ENCODE measurements at regions of chr7 and their contacts with region 1.

Region 1: DNA sequence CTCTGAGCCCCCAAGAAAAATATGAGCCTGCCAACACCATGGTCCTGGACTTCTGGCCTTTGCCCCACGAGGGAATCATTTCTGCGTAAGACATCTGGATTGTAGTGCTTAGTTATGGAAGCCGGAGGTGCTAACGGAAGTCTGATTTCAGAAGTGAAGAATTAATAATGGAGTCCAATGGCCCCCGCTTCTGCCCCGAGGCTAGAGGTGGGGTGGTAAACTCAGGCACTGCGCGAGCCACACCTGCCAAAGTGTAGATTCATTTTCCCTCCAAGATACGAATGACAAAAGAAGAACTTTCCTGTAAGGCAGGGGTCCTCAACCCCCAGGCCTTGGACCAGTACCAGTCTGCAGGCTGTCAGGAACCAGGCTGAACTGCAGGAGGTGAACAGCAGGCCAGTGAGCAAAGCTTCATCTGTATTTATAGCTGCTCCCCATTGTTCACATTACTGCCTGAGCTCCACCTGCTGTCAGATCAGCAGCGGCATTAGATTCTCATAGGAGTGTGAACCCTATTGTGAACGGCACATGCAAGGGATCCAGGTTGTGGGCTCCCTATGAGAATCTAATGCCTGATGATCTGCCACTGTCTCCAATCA is 22.2 kb downstream of the CNPY1 start:
- DNase-seq: no peak
- ATAC-seq: peak; percentile 54; the same call in 1 of the 2 replicates
- H3K4me3 ChIP-seq: no peak overlapping the region
- H3K27ac ChIP-seq: no peak overlapping the region
- H3K4me1 ChIP-seq: no peaks in the 10 kb centered on the region
- H3K27me3 ChIP-seq: peaks cover 14% of the 10 kb centered on the region
- CTCF ChIP-seq: no peak; the same call in 1 of the 2 replicates

Region 2: GRCh38 chr7:155380221-155380861 is 143.8 kb before region 1 on chr7:
- CTCF ChIA-PET with region 1: interaction called, 7 read pairs
- POLR2A ChIA-PET with region 1: no interaction called
- in situ Hi-C with region 1: no loop called
- intact Hi-C with region 1: loop called (anchors 10 kb)
- DNase-seq: peak; percentile 51
- ATAC-seq: peak; percentile 85
- H3K4me3 ChIP-seq: no peak overlapping the region
- H3K27ac ChIP-seq: no peak overlapping the region
- H3K4me1 ChIP-seq: peaks cover 4% of the 10 kb centered on the region
- H3K27me3 ChIP-seq: peaks cover 48% of the 10 kb centered on the region
- CTCF ChIP-seq: peak; percentile 91